Astrocyte of the cerebellum (primary cell): ENCODE measurements at regions of chr7 and their contacts with region 1.

Region 1: GRCh38 chr7:155439311-155440017 is 18.5 kb upstream of the EN2 start:
- DNase-seq: no peak
- H3K4me3 ChIP-seq: no peak overlapping the region
- CTCF ChIP-seq: no peak

Region 2: DNA sequence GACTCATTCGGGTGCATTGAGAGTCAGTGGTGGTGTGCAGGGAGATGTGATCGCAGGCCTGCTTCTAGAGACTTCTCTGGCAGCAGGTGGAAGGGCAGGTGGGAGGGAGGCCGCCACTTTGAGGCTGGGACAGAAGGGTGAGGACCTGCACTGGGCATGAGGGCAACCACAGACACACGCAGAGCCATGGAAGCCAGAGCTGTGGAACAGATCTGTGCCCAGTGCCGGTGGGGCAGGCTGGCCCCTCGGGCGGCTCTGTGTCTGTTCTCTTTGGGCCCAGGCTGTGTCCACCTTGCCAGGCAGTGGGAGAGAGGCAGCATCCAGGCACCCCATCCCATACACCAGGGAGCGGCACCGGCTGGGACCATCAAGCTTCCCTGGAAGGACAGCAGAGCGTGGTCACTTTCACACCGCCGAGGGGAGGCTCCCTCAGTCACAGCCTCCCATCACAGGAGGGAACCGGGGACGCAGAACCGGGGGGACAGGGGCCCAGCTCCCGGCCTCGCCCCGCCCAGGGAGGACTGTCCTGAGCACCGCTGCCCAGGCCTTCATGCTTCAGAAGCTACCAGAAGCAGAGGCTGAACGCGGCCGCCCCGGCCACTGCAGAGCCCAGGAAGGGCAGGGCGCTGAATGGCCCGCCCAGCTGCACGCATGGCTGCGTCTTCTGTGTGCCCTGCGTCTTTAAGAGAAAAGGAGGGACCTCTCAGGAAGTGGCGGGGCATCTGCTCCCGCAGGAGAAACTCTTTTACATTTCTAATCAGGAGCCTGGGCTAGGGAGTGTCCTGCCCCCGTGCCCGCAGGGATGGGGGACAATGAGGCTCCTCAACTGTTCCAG is 50.6 kb after region 1 on chr7:
- in situ Hi-C with region 1: loop called (anchors 5 kb)
- DNase-seq: no peak
- H3K4me3 ChIP-seq: peak overlapping the region; percentile 17
- CTCF ChIP-seq: no peak